Activated T-helper 2 cell treated with anti-CD3 and anti-CD28 coated beads, Interferon-gamma antibody, Interleukin-2, Interleukin-4, amounts not matched to agents 10 μg/mL and 5 μg/mL and 100 μg/mL, durations not matched to agents 14 hours and 24 hours and 36 hours (primary cell): ENCODE measurements at regions of chr6 and their contacts with region 1.

Region 1: DNA sequence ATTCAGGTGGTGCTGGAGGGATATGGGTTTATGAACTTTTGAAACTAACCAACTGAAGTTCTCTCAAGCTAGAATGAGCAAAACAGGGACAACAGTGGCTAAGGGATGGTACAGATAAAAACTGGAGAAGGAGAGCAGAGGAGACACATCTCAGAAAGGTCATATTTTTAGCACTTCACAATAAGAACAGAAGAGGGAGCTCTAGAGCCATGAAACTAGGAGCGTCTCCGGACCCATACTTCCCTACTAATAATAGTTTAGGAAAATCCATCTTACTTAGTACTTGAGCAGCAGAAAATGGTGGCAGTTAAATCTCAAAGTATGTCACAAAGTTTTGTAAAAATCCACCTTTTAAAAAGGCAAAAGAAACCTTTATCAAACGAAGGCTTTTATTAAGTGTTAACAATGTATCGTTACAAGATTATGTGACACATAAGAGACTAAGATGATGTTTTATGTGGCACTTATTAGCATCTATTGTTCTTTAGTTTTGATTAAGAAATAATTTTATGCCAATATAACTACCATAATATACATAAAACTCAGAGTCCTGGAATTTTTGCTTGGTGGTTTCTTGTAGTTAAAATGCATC is 278.6 kb downstream of the TBC1D32 start:
- DNase-seq: no peak
- H3K4me3 Mint-ChIP-seq: no peak overlapping the region
- H3K27ac Mint-ChIP-seq: no peak overlapping the region
- H3K4me1 Mint-ChIP-seq: no peaks in the 10 kb centered on the region
- H3K27me3 Mint-ChIP-seq: peaks cover 2% of the 10 kb centered on the region

Region 2: DNA sequence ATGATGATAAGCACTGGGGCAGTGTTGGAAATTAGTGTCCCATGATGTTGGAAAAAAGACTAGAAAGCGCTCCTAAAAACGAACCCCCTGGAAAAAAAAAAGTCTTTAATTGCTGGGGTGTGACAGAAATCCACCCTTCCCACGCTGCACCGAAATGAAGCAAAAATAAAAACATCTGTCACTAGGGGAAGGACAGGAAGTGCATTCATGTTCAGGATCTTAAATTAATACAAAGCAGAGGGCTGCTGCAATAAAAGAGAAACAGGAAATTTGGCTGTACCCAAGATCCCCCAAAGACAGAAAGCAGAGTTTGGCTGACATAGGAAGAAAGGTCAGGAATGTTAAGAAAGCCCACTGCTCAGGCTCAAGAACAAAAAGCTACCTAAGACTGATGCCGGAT is 55.3 kb before region 1 on chr6:
- intact Hi-C with region 1: no loop called
- DNase-seq: no peak
- H3K4me3 Mint-ChIP-seq: no peak overlapping the region
- H3K27ac Mint-ChIP-seq: no peak overlapping the region
- H3K4me1 Mint-ChIP-seq: no peaks in the 10 kb centered on the region
- H3K27me3 Mint-ChIP-seq: no peaks in the 10 kb centered on the region

Region 3: GRCh38 chr6:121222656-121223055 is 167.0 kb after region 1 on chr6:
- intact Hi-C with region 1: loop called (anchors 5 kb)
- DNase-seq: no peak
- H3K4me3 Mint-ChIP-seq: no peak overlapping the region
- H3K27ac Mint-ChIP-seq: no peak overlapping the region
- H3K4me1 Mint-ChIP-seq: peaks cover 5% of the 10 kb centered on the region
- H3K27me3 Mint-ChIP-seq: no peaks in the 10 kb centered on the region

Region 4: DNA sequence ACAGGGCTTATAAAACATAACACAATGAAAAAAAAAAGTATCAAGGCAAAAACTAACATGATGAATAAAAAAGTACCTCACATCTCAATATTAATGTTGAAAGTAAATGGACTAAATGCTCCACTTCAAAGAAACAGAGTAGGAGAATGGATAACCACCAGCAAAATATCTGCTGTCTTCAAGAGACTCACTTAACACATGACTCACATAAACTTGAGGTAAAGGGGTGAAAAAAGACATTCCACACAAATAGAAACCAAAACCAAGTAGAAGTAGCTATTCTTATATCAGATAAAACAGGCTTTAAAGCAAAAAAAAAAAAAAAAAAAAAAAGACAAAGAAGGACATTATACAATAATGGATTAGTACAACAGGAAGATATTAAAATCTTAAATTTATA is 191.7 kb after region 1 on chr6:
- intact Hi-C with region 1: loop called (anchors 5 kb)
- DNase-seq: no peak
- H3K4me3 Mint-ChIP-seq: no peak overlapping the region
- H3K27ac Mint-ChIP-seq: no peak overlapping the region
- H3K4me1 Mint-ChIP-seq: peaks cover 13% of the 10 kb centered on the region
- H3K27me3 Mint-ChIP-seq: no peaks in the 10 kb centered on the region

Region 5: GRCh38 chr6:121305957-121306607 is 250.4 kb after region 1 on chr6:
- intact Hi-C with region 1: loop called (anchors 1 kb)
- DNase-seq: no peak
- H3K4me3 Mint-ChIP-seq: no peak overlapping the region
- H3K27ac Mint-ChIP-seq: no peak overlapping the region
- H3K4me1 Mint-ChIP-seq: peaks cover 6% of the 10 kb centered on the region
- H3K27me3 Mint-ChIP-seq: no peaks in the 10 kb centered on the region

Region 6: GRCh38 chr6:121849477-121849876 is 793.8 kb after region 1 on chr6:
- intact Hi-C with region 1: loop called (anchors 1 kb)
- DNase-seq: no peak
- H3K4me3 Mint-ChIP-seq: no peak overlapping the region
- H3K27ac Mint-ChIP-seq: no peak overlapping the region
- H3K4me1 Mint-ChIP-seq: no peaks in the 10 kb centered on the region
- H3K27me3 Mint-ChIP-seq: no peaks in the 10 kb centered on the region

Region 7: GRCh38 chr6:122033539-122034181 is 978.0 kb after region 1 on chr6:
- intact Hi-C with region 1: loop called (anchors 1 kb)
- DNase-seq: no peak
- H3K4me3 Mint-ChIP-seq: no peak overlapping the region
- H3K27ac Mint-ChIP-seq: no peak overlapping the region
- H3K4me1 Mint-ChIP-seq: no peaks in the 10 kb centered on the region
- H3K27me3 Mint-ChIP-seq: no peaks in the 10 kb centered on the region